Left cardiac atrium (tissue), 4 donors: ENCODE measurements at regions of chr1 and their contacts with region 1.

Region 1: GRCh38 chr1:53878492-53879105 is 11.0 kb downstream of the YIPF1 start:
- DNase-seq: no peak
- ATAC-seq: no peak

Region 2: DNA sequence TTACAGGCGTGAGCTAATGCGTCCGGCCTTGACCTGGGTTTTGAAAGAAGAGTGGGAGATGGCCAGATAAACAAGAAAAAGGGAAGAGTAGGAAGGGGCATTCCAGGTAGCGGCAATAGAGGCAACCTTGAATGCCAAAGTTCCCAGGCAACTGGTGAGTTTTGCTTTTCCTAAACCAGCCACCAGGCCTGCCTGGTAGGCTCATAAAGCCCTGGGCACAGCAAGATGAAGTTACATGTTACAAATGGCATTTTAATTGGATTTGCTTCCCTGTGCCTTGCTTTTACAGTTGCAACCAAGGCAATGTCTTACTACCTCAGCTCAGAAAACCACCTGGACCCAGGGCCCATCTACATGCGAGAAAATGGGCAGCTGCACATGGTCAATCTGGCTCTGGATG is 73.1 kb after region 1 on chr1:
- intact Hi-C with region 1: loop called (anchors 5 to 10 kb)
- DNase-seq: no peak
- ATAC-seq: no peak

Region 3: GRCh38 chr1:53959664-53960250 is 81.2 kb after region 1 on chr1:
- intact Hi-C with region 1: loop called (anchors 5 to 10 kb)
- DNase-seq: no peak
- ATAC-seq: no peak

Region 4: GRCh38 chr1:54047384-54048305 is 169.0 kb after region 1 on chr1:
- intact Hi-C with region 1: no loop called
- DNase-seq: no peak
- ATAC-seq: no peak

Region 5: DNA sequence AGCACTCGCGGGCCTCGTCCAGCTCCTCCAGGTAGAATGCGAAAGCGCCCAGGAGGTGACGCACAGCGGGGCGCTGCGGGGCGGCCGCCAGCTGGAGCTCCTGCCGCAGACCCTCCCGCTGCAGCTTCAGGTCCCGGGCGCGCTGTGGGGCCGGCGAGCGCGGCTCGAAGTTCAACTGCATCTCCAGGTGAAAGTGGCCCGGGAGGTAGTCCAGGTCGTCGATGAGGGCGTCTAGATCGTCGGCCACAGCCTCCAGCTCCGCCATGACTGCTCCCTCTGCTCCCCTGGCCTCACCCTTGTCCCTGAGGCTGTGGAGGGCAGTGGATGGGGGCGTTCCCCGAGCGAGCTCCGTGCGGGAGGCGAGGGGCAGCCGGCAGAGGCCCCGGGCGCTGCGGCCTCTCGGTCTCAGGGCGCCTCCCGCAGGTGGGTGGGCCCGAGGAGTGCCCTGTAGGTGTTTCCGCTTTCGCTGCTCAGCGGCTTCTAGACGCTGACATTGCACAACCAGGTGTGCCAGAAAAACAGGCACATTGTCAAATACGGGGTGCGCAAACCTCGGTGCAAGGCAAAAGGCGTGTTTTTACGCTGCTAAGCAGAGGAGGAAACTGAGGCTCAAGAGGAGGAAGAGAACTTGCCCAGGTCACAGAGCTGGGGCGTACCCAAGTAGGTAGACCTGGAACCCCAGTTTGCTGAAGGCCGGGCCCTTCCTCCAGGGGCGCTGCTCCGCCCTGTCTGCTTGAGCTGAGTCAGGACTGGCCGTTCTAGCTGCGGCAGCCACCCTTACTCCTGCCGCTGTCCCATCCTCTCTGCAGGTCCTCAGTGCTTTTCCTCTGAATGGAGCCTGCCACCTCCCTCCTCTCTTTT is 922.5 kb after region 1 on chr1 and contains the start of gene TTC22:
- intact Hi-C with region 1: loop called in 1 of 2 experiments (anchors 10 kb)
- DNase-seq: no peak
- ATAC-seq: peak; percentile 68 to 75
- total RNA-seq, gene TTC22: 0.31 to 0.47 TPM